ENCODE measurements at regions of chr11 and their contacts with region 1.

Region 1: DNA sequence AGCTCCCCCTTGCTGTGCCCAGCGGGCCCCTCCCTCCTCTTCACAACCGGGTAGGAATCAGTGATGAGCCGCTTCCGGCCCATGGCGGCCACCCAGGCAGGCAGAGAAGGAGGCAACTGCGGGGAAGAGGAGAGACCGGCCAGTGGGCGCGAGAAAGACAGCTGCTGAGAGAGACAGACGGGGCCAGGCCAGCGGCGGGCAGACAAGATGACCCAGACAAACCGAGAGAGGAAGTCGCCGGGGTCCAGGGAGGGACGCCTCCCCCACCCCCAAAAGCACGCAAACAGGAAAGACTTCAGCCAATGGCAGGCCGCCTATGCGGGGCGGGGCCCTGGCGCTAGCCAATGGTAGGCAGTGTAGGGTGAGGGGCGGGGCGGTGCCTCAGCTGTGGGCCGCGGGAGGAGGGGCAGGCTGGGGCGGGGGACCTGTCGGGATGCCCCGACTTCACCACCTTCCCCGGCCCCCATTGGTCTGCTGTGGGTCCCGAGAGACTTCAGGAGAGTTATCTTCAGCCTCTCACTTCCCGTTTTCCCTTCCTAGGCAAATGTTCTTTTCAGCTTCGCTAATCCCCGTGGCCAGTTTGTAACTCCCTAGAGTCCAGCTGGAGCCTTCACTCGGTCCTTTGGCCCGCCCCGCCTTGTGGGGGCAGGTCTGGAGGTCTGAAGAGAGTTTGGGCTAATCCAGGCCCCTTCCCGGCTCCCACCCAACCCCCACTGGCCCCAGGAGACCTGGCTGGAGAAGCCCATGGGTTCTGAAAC is at the start of gene POLD4:
- DNase-seq: peak; percentile 74
- H3K4me3 ChIP-seq: peak within 1 kb of the TSS; percentile 78
- H3K27me3 ChIP-seq: no peaks in the 10 kb centered on the region
- CTCF ChIP-seq: no peak
- polyA plus RNA-seq, gene POLD4: 95.6 and 119 TPM in 2 replicates

Region 2: GRCh38 chr11:67322710-67323109 is 30.8 kb before region 1 on chr11:
- CTCF ChIA-PET with region 1: interaction called, 20 read pairs
- POLR2A ChIA-PET with region 1: no interaction called
- DNase-seq: no peak
- H3K4me3 ChIP-seq: no peak overlapping the region
- H3K27me3 ChIP-seq: no peaks in the 10 kb centered on the region
- CTCF ChIP-seq: no peak

Region 3: GRCh38 chr11:67366961-67367760 is 13.7 kb after region 1 on chr11:
- CTCF ChIA-PET with region 1: interaction called, 892 read pairs
- POLR2A ChIA-PET with region 1: interaction called, 3 read pairs
- DNase-seq: no peak
- H3K4me3 ChIP-seq: no peak overlapping the region
- H3K27me3 ChIP-seq: no peaks in the 10 kb centered on the region
- CTCF ChIP-seq: no peak

Region 4: DNA sequence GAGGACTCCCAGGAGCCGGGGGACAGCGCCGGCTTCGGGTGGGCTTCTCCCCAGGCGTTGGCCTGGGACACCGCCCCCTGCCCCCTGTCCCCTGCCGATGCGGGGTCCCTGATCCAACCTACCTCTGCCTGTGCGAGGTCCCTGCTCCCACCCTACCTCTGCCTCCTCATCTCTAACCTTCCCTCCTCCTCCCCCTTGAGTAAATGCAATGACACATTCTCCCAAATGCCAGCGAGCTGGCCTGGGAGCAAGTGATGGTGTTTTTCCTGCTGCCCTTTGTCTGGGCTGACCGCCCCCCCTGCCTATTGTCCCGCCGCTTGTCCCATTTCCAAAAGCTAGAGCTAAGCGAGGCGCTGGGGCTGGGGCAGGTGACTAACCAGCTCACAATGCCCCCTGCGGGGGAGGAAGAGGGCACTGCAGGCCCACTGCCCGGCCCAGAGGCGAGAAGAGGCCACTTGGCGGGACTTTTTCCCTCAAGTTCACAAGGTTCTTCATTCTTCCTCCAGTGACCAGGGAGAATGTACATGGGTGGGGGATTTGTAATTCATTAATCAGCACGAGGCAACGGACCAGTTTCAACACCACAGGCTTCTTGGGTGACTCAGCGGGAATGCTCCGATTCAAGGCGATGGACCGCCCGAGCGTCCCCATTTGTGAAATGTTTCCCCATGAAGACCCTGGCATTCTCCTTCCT is 20.6 kb after region 1 on chr11:
- CTCF ChIA-PET with region 1: interaction called, 892 read pairs
- POLR2A ChIA-PET with region 1: interaction called, 13 read pairs
- DNase-seq: peak; percentile 89
- H3K4me3 ChIP-seq: peak overlapping the region; percentile 72
- H3K27me3 ChIP-seq: no peaks in the 10 kb centered on the region
- CTCF ChIP-seq: peak; percentile 45

Region 5: GRCh38 chr11:67391304-67392132 is 38.0 kb after region 1 on chr11 and contains the start of gene RAD9A:
- CTCF ChIA-PET with region 1: interaction called, 892 read pairs
- POLR2A ChIA-PET with region 1: interaction called, 5 read pairs
- DNase-seq: no peak
- H3K4me3 ChIP-seq: peak within 1 kb of the TSS; percentile 92
- H3K27me3 ChIP-seq: no peaks in the 10 kb centered on the region; the same call in 1 of the 2 replicates
- CTCF ChIP-seq: no peak
- polyA plus RNA-seq, gene RAD9A: 5.9 and 10.7 TPM in 2 replicates

Measured in BJ (cell line).